Activated B cell treated with CpG ODN at 0.5 μM for 24 hours (primary cell): ENCODE measurements at regions of chr22 and their contacts with region 1.

Region 1: GRCh38 chr22:24803011-24803542 is 2.9 kb upstream of the SGSM1 start:
- DNase-seq: peak; percentile 42
- ATAC-seq: no peak
- H3K4me3 Mint-ChIP-seq: no peak overlapping the region
- H3K27ac Mint-ChIP-seq: no peak overlapping the region
- H3K4me1 Mint-ChIP-seq: peaks cover 5% of the 10 kb centered on the region
- H3K27me3 Mint-ChIP-seq: peaks cover 7% of the 10 kb centered on the region
- CTCF ChIP-seq: peak; percentile 91

Region 2: GRCh38 chr22:24845041-24845898 is 42.2 kb after region 1 on chr22:
- CTCF ChIA-PET with region 1: no interaction called
- POLR2A ChIA-PET with region 1: no interaction called
- intact Hi-C with region 1: loop called (anchors 2 kb)
- DNase-seq: no peak
- ATAC-seq: no peak
- H3K4me3 Mint-ChIP-seq: no peak overlapping the region
- H3K27ac Mint-ChIP-seq: no peak overlapping the region
- H3K4me1 Mint-ChIP-seq: no peaks in the 10 kb centered on the region
- H3K27me3 Mint-ChIP-seq: peaks cover 18% of the 10 kb centered on the region
- CTCF ChIP-seq: no peak